Naive thymus-derived CD4-positive, alpha-beta T cell (primary cell): ENCODE measurements at regions of chr7 and their contacts with region 1.

Region 1: DNA sequence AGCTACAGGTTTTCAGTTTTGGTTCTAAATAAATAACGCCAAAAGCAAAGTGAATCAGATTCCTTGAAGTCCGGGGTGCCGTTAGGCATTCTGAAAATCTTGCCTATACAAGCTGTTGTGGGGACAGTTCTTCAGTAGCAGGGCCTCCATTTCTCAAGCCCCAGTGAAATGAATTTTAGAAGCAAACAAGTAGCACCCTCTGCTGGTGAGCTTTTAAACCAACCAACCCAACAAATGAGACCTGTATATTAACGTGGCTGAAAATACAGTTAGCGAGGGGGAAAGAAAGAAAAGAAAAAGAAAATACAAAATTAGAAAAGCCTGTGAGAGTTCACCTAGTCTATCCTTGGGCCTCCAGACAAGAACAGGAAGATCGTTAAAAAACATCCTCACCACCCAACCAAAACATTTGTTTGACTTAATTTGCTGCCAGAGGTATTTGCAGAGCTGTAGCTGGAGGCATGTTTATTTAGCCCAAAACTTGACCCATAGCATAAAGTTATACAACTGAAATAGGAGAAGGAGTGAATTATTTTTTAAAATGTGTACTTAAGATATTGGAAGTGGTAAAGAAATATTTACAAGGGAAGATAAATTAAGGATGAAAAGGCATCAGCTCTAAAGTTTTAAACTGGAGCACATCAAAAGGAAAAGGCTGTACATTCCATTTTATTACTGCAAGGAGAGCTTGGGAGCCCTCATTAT is 98.9 kb downstream of the DYNC1I1 start:
- DNase-seq: peak in 1 of 9 donors; percentile 6
- ATAC-seq: no peak
- H3K4me3 ChIP-seq: no peak overlapping the region
- H3K4me3 Mint-ChIP-seq: no peak overlapping the region
- H3K27ac ChIP-seq: no peak overlapping the region
- H3K27ac Mint-ChIP-seq: no peak overlapping the region
- H3K4me1 ChIP-seq: no peaks in the 10 kb centered on the region
- H3K4me1 Mint-ChIP-seq: no peaks in the 10 kb centered on the region
- H3K27me3 ChIP-seq: peaks cover 0 to 4% of the 10 kb centered on the region in 2 donors
- H3K27me3 Mint-ChIP-seq: peaks cover 1 to 26% (median 15%) of the 10 kb centered on the region in 5 donors

Region 2: DNA sequence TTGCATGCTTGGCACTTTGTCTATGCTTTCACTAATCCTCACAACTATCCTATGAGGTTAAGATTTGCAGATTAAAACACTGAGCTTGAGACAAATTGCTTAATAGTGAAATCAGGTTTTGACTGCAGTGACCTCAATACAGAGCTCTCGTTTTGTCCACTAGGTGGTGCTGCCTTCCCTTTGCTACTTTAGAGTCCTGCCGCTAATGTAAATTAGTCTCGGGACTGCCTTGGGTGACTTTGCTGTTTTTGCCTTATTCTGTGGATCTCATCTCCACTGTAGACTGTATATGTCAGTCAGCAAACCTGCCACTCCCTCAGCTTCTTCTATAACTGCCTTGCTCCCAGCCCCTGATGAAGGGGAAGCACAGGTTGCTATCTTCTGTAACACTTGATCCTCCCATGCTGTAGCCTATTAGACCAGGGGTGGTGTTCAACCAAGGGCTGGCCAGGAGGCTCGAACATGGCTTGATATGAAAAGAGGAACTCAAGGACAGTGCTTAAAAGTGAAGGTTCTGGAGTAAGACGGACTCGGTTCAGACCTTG is 359.4 kb before region 1 on chr7:
- CTCF ChIA-PET with region 1: no interaction called
- POLR2A ChIA-PET with region 1: no interaction called
- intact Hi-C with region 1: loop called in 1 of 2 experiments (anchors 5 kb)
- DNase-seq: peak in 5 of 9 donors; percentile 9 to 43 (median 19)
- ATAC-seq: peak; percentile 87
- H3K4me3 ChIP-seq: no peak overlapping the region
- H3K4me3 Mint-ChIP-seq: peak overlapping the region in 1 of 10 donors; percentile 4
- H3K27ac ChIP-seq: no peak overlapping the region
- H3K27ac Mint-ChIP-seq: no peak overlapping the region
- H3K4me1 ChIP-seq: no peaks in the 10 kb centered on the region
- H3K4me1 Mint-ChIP-seq: peaks cover 0 to 4% (median 0%) of the 10 kb centered on the region in 7 donors
- H3K27me3 ChIP-seq: no peaks in the 10 kb centered on the region
- H3K27me3 Mint-ChIP-seq: peaks cover 0 to 18% (median 16%) of the 10 kb centered on the region in 5 donors

Region 3: DNA sequence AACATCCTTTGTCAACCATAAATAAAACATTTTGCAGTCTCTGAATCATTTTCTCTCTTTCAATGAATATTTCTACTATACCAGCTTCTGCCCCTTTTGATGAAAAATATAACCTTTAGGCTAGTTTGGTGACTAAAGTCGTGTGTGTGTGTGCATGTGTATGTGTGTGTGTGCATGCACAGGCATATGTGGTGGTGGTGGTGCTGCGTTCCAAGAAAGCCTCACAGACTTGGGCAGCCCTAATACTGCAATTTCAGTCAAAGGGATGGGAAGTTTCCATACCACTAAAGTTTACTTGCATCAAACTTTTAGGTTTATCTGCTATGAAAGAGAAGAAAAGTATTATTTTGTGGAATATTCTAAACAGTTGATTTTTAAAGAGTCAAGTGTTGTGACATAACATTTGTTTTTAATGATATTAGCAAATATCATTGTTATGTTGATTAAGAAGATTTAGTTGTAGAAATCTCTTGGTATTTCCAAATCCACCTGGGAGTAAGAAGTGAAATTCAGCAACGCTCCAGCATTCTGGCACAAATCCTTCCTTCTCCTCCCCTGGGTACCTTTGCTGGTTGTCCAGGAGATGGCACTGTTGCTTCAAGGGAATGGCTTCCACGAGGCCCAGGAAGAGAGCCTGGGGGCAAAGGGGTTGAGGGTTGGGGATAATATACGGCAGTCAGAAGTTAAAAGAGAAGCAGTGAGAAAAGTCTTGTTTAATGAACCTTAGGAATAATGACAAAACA is 344.0 kb before region 1 on chr7:
- CTCF ChIA-PET with region 1: no interaction called
- POLR2A ChIA-PET with region 1: no interaction called
- intact Hi-C with region 1: loop called in 1 of 2 experiments (anchors 1 kb)
- DNase-seq: no peak
- ATAC-seq: peak; percentile 50
- H3K4me3 ChIP-seq: no peak overlapping the region
- H3K4me3 Mint-ChIP-seq: no peak overlapping the region
- H3K27ac ChIP-seq: no peak overlapping the region
- H3K27ac Mint-ChIP-seq: no peak overlapping the region
- H3K4me1 ChIP-seq: no peaks in the 10 kb centered on the region
- H3K4me1 Mint-ChIP-seq: no peaks in the 10 kb centered on the region
- H3K27me3 ChIP-seq: no peaks in the 10 kb centered on the region
- H3K27me3 Mint-ChIP-seq: peaks cover 5 to 19% (median 8%) of the 10 kb centered on the region in 5 donors

Region 4: DNA sequence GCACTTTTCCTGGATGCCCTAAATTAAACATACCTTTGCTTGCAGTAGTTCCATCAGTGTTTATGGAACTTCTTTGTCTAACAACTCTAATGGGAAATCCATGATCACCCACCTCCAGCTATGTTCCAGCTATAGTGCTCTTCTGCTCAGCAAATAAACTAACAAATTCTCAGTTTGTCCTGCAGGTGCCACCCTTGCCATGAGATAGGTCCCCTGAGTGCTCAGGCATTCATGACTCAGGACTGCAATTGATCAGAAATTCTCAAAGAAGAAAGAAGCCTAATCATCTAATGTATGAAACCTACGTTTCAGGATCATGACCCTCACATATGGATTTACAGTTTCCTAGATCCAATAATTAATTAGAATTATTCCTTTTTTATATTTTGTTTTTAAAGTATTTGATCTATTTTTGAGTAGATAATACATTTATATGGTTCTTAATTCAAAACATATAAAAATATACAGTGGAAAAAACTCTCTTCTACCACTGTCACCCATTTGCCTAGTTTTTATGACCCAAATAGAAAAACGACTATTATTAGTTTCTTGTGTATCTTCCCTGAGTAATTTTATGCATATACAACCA is 147.5 kb before region 1 on chr7:
- CTCF ChIA-PET with region 1: no interaction called
- POLR2A ChIA-PET with region 1: no interaction called
- intact Hi-C with region 1: loop called in 1 of 2 experiments (anchors 2 kb)
- DNase-seq: no peak
- ATAC-seq: no peak
- H3K4me3 ChIP-seq: no peak overlapping the region
- H3K4me3 Mint-ChIP-seq: no peak overlapping the region
- H3K27ac ChIP-seq: no peak overlapping the region
- H3K27ac Mint-ChIP-seq: no peak overlapping the region
- H3K4me1 ChIP-seq: no peaks in the 10 kb centered on the region
- H3K4me1 Mint-ChIP-seq: peaks cover 0 to 1% (median 0%) of the 10 kb centered on the region in 7 donors
- H3K27me3 ChIP-seq: no peaks in the 10 kb centered on the region
- H3K27me3 Mint-ChIP-seq: peaks cover 0 to 10% (median 6%) of the 10 kb centered on the region in 5 donors